Caco-2 (cell line): ENCODE measurements at regions of chr5 and their contacts with region 1.

Region 1: GRCh38 chr5:2017540-2018389 is 135.0 kb upstream of the IRX4 start:
- DNase-seq: no peak
- H3K4me3 ChIP-seq: no peak overlapping the region
- H3K4me3 Mint-ChIP-seq: no peak overlapping the region
- H3K27ac Mint-ChIP-seq: no peak overlapping the region
- H3K4me1 ChIP-seq: no peaks in the 10 kb centered on the region
- H3K4me1 Mint-ChIP-seq: no peaks in the 10 kb centered on the region
- H3K27me3 ChIP-seq: no peaks in the 10 kb centered on the region
- H3K27me3 Mint-ChIP-seq: peaks cover 30% of the 10 kb centered on the region
- CTCF ChIP-seq: peak; percentile 2 to 19

Region 2: DNA sequence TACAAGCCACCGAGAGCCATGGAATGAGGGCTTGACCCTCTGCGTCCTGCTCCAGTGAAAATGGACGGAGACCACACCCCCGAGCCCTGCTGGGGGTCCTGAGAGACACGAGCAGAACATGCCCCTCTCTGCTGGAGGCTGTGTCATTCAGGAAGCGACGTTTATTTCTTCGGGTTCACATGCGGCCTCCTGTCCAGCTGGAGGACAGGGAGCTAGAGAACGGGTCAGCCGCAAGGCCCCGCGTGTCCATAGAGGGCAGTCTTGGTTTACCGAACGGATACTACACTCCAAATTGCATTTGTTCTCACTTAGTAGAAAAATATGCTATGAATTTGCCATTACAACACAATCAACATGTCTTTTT is 254.2 kb before region 1 on chr5:
- CTCF ChIA-PET with region 1: no interaction called
- POLR2A ChIA-PET with region 1: no interaction called
- intact Hi-C with region 1: loop called (anchors 10 kb)
- DNase-seq: peak; percentile 56 to 63
- H3K4me3 ChIP-seq: no peak overlapping the region
- H3K4me3 Mint-ChIP-seq: no peak overlapping the region
- H3K27ac Mint-ChIP-seq: no peak overlapping the region
- H3K4me1 ChIP-seq: no peaks in the 10 kb centered on the region
- H3K4me1 Mint-ChIP-seq: no peaks in the 10 kb centered on the region
- H3K27me3 ChIP-seq: no peaks in the 10 kb centered on the region; the same call in 1 of the 2 replicates
- H3K27me3 Mint-ChIP-seq: peaks cover 11% of the 10 kb centered on the region
- CTCF ChIP-seq: peak; percentile 60 to 72